ENCODE measurements at regions of chr2 and their contacts with region 1.

Region 1: GRCh38 chr2:112121682-112122254 is 16.4 kb upstream of the FBLN7 start:
- DNase-seq: peak; percentile 46 to 58 (median 52)
- H3K4me3 ChIP-seq: no peak overlapping the region
- H3K4me3 Mint-ChIP-seq: no peak overlapping the region
- H3K27ac ChIP-seq: no peak overlapping the region
- H3K27ac Mint-ChIP-seq: peak overlapping the region in 3 of 7 donors; percentile 16 to 68 (median 38)
- H3K4me1 ChIP-seq: no peaks in the 10 kb centered on the region
- H3K4me1 Mint-ChIP-seq: no peaks in the 10 kb centered on the region
- H3K27me3 ChIP-seq: no peaks in the 10 kb centered on the region
- H3K27me3 Mint-ChIP-seq: no peaks in the 10 kb centered on the region

Region 2: GRCh38 chr2:111534816-111535803 is 586.7 kb before region 1 on chr2:
- CTCF ChIA-PET with region 1: no interaction called
- POLR2A ChIA-PET with region 1: no interaction called
- intact Hi-C with region 1: no loop called
- DNase-seq: peak in 3 of 5 donors; percentile 11 to 19 (median 14)
- H3K4me3 ChIP-seq: no peak overlapping the region
- H3K4me3 Mint-ChIP-seq: peak overlapping the region; percentile 68 to 91 (median 79)
- H3K27ac ChIP-seq: no peak overlapping the region
- H3K27ac Mint-ChIP-seq: peak overlapping the region; percentile 43 to 90 (median 83)
- H3K4me1 ChIP-seq: peaks cover 14% of the 10 kb centered on the region
- H3K4me1 Mint-ChIP-seq: peaks cover 17 to 41% (median 20%) of the 10 kb centered on the region in 4 donors
- H3K27me3 ChIP-seq: no peaks in the 10 kb centered on the region
- H3K27me3 Mint-ChIP-seq: peaks cover 0 to 1% of the 10 kb centered on the region in 2 donors

Region 3: GRCh38 chr2:112144966-112145365 is 23.2 kb after region 1 on chr2:
- CTCF ChIA-PET with region 1: no interaction called
- POLR2A ChIA-PET with region 1: no interaction called
- intact Hi-C with region 1: no loop called
- DNase-seq: no peak
- H3K4me3 ChIP-seq: no peak overlapping the region
- H3K4me3 Mint-ChIP-seq: no peak overlapping the region
- H3K27ac ChIP-seq: no peak overlapping the region
- H3K27ac Mint-ChIP-seq: no peak overlapping the region
- H3K4me1 ChIP-seq: no peaks in the 10 kb centered on the region
- H3K4me1 Mint-ChIP-seq: no peaks in the 10 kb centered on the region
- H3K27me3 ChIP-seq: no peaks in the 10 kb centered on the region
- H3K27me3 Mint-ChIP-seq: peaks cover 4 to 5% of the 10 kb centered on the region in 2 donors

Region 4: DNA sequence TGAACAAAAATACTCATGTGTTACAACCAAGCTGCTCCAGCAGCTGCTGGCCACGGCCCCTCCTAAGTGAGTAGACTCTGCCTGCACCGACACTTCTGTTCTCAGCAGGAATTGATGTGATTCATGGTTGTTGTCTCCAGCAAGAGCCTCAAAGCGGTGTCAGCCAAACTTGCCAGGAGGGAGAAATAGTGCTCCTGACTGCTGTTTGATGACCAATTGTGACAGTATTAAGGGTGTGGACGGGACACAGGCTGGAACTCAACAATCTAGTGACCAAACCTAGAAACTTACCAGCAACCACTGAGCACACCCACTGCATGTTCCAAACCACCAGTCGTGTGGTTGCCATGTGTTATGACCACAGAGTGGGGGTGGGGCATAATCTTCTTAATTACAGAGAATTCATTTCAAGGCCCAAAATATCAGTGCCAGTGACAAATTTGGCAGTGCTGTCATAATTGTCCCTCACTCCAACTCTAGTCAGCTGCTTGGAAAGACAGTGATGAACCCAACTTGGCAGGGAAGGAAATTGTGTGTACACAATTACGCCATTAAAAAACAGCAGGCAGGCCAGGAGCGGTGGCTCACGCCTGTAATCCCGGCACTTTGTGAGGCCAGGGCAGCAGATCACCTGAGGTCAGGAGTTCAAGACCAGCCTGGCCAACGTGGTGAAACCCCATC is 46.8 kb after region 1 on chr2:
- CTCF ChIA-PET with region 1: no interaction called
- POLR2A ChIA-PET with region 1: no interaction called
- intact Hi-C with region 1: loop called (anchors 2 kb)
- DNase-seq: no peak
- H3K4me3 ChIP-seq: no peak overlapping the region
- H3K4me3 Mint-ChIP-seq: no peak overlapping the region
- H3K27ac ChIP-seq: no peak overlapping the region
- H3K27ac Mint-ChIP-seq: no peak overlapping the region
- H3K4me1 ChIP-seq: peaks cover 1% of the 10 kb centered on the region
- H3K4me1 Mint-ChIP-seq: peaks cover 10 to 17% (median 11%) of the 10 kb centered on the region in 4 donors
- H3K27me3 ChIP-seq: no peaks in the 10 kb centered on the region
- H3K27me3 Mint-ChIP-seq: no peaks in the 10 kb centered on the region

Region 5: DNA sequence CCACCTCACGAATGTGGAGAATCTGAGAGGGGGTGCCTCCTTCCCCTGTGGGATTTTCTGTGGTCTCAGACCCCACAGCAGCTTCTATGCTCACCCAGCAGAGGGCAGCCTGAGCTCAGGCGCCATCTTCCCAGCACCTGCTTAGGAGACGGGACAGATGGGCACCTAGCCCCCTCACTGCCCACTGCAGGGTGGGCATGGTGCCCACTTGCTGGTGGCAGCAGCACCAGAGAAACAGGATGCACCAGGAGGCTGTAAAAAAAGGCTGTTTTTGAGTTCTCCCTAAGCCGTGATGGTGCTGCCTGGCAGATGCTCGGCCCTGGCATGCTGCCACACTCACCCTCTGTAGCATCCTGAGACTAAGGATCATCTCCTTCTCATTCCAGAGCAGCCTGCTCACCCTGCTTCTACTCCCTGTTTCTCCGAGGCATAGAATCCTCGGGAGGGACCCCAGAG is 504.9 kb after region 1 on chr2:
- CTCF ChIA-PET with region 1: no interaction called
- POLR2A ChIA-PET with region 1: no interaction called
- intact Hi-C with region 1: no loop called
- DNase-seq: peak; percentile 57 to 75 (median 63)
- H3K4me3 ChIP-seq: peak overlapping the region in 1 of 2 donors; percentile 46
- H3K4me3 Mint-ChIP-seq: peak overlapping the region; percentile 69 to 83 (median 78)
- H3K27ac ChIP-seq: peak overlapping the region; percentile 15
- H3K27ac Mint-ChIP-seq: peak overlapping the region; percentile 57 to 95 (median 85)
- H3K4me1 ChIP-seq: peaks cover 75% of the 10 kb centered on the region
- H3K4me1 Mint-ChIP-seq: peaks cover 36 to 80% (median 60%) of the 10 kb centered on the region in 4 donors
- H3K27me3 ChIP-seq: no peaks in the 10 kb centered on the region
- H3K27me3 Mint-ChIP-seq: peaks cover 0 to 3% of the 10 kb centered on the region in 2 donors